Aorta (tissue), 5 donors: ENCODE measurements at regions of chr7 and their contacts with region 1.

Region 1: DNA sequence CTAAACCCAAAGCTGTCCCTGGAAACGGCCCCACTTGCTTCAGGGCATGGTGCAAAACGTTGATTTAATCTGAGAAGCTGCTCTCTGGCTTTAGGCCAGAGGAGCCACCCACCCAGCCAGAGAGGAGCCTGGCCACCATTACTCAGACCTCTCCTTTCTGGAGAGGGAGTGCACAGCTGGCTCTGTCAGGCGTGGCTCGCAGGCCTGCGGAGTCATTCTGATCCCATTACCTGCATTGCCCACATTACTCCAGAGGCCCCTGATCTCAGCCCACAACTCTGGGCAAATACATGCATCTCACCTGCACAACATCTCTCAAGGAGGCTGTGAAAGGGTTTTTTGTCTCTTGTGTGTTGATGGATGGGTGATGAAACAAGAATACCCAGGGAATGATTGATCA is 370.0 kb upstream of the IGFBP3 start:
- DNase-seq: no peak
- ATAC-seq: no peak
- H3K4me3 ChIP-seq: no peak overlapping the region
- H3K27ac ChIP-seq: no peak overlapping the region
- H3K4me1 ChIP-seq: peaks cover 0 to 4% of the 10 kb centered on the region in 2 donors
- H3K27me3 ChIP-seq: no peaks in the 10 kb centered on the region

Region 2: GRCh38 chr7:46145412-46145811 is 145.7 kb before region 1 on chr7:
- intact Hi-C with region 1: loop called in 1 of 2 experiments (anchors 5 kb)
- DNase-seq: peak in 1 of 2 donors; percentile 59
- ATAC-seq: peak; percentile 62
- H3K4me3 ChIP-seq: no peak overlapping the region
- H3K27ac ChIP-seq: no peak overlapping the region
- H3K4me1 ChIP-seq: peaks cover 11 to 23% of the 10 kb centered on the region in 2 donors
- H3K27me3 ChIP-seq: no peaks in the 10 kb centered on the region

Region 3: DNA sequence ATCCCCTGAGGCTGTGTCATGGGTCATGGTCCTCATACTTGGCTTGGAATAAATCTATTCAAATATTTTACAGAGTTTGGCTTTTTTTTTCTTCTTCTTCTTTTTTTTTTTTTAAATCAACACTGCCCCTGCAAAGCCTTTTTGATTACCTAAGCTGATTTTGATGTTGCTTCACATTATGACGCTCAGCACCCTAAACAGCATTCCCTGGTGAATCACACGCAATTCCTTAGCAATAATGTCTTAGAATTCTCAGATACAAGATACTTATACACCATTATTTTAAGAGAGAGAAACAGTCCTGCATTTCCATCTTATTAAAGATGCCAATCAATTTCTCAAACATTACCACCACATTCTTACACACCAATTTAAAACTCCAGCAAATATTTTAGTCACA is 46.3 kb before region 1 on chr7:
- intact Hi-C with region 1: no loop called
- DNase-seq: no peak
- ATAC-seq: no peak
- H3K4me3 ChIP-seq: no peak overlapping the region
- H3K27ac ChIP-seq: no peak overlapping the region
- H3K4me1 ChIP-seq: peaks cover 0 to 3% of the 10 kb centered on the region in 2 donors
- H3K27me3 ChIP-seq: no peaks in the 10 kb centered on the region